Endothelial cell of umbilical vein (primary cell): ENCODE measurements at regions of chr19 and their contacts with region 1.

Region 1: GRCh38 chr19:53195265-53195903 is 2.2 kb upstream of the ZNF665 start:
- DNase-seq: peak; percentile 82
- H3K4me3 ChIP-seq: no peak overlapping the region
- H3K27ac ChIP-seq: no peak overlapping the region
- H3K4me1 ChIP-seq: peaks cover 2% of the 10 kb centered on the region
- H3K27me3 ChIP-seq: no peaks in the 10 kb centered on the region
- CTCF ChIP-seq: peak; percentile 83
- POLR2A ChIP-seq: no peak

Region 2: GRCh38 chr19:52397310-52398080 is 797.9 kb before region 1 on chr19 and contains the start of gene ZNF528:
- CTCF ChIA-PET with region 1: no interaction called
- POLR2A ChIA-PET with region 1: no interaction called
- dilution Hi-C with region 1: no loop called
- intact Hi-C with region 1: loop called (anchors 10 kb)
- DNase-seq: peak; percentile 92
- H3K4me3 ChIP-seq: peak within 1 kb of the TSS; percentile 14 to 73 (median 49)
- H3K27ac ChIP-seq: peak within 1 kb of the TSS; percentile 42
- H3K4me1 ChIP-seq: no peaks in the 10 kb centered on the region
- H3K27me3 ChIP-seq: no peaks in the 10 kb centered on the region
- CTCF ChIP-seq: no peak
- POLR2A ChIP-seq: peak; percentile 84
- total RNA-seq, gene ZNF528: 11.3 and 16.1 TPM in 2 replicates

Region 3: DNA sequence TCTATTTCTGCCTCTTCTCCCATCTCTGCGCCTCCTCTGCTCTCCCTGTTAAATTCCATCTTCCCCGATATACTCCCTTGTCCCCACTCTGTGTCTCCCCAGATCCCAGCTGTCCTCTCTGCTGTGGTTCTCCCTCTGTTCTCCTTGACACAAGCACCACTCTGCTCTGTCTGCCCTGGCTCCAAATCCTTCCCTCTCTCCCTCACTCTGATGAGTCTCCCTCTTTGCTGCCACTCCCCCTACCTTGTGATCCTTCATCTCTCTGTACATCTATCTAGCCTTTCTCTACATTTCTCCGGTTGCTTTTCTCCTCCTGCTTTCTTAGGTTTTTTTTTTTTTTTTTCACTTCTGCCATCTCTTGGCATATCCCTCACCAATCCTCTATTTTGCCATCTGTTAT is 461.5 kb before region 1 on chr19:
- CTCF ChIA-PET with region 1: no interaction called
- POLR2A ChIA-PET with region 1: no interaction called
- dilution Hi-C with region 1: no loop called
- intact Hi-C with region 1: no loop called
- DNase-seq: no peak
- H3K4me3 ChIP-seq: peak overlapping the region; percentile 47 to 96 (median 93)
- H3K27ac ChIP-seq: no peak overlapping the region
- H3K4me1 ChIP-seq: peaks cover 9% of the 10 kb centered on the region
- H3K27me3 ChIP-seq: no peaks in the 10 kb centered on the region
- CTCF ChIP-seq: no peak
- POLR2A ChIP-seq: no peak

Region 4: DNA sequence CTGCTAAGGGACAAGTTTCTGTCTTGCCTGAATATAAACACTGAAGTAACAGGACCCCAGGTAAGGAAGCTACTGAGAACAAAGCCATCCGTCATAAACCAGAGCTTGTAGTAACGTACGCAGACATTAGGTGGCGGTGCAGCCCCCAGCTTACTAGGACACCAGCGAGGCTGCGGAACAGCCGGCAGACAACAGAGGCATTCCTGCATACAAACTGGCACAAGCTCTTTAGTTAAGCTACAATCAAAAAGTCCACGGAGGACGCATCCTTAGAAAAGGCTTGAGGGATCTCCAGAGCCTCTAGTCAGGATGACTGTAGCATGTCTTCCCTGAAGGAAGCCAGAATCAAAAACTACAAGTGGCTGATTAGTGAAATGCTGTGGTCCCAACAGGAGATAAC is 118.4 kb before region 1 on chr19:
- CTCF ChIA-PET with region 1: interaction called, 20 read pairs
- POLR2A ChIA-PET with region 1: no interaction called
- dilution Hi-C with region 1: no loop called
- intact Hi-C with region 1: loop called (anchors 5 kb)
- DNase-seq: peak; percentile 72
- H3K4me3 ChIP-seq: no peak overlapping the region
- H3K27ac ChIP-seq: no peak overlapping the region
- H3K4me1 ChIP-seq: no peaks in the 10 kb centered on the region
- H3K27me3 ChIP-seq: no peaks in the 10 kb centered on the region
- CTCF ChIP-seq: peak; percentile 78 to 79
- POLR2A ChIP-seq: no peak

Region 5: DNA sequence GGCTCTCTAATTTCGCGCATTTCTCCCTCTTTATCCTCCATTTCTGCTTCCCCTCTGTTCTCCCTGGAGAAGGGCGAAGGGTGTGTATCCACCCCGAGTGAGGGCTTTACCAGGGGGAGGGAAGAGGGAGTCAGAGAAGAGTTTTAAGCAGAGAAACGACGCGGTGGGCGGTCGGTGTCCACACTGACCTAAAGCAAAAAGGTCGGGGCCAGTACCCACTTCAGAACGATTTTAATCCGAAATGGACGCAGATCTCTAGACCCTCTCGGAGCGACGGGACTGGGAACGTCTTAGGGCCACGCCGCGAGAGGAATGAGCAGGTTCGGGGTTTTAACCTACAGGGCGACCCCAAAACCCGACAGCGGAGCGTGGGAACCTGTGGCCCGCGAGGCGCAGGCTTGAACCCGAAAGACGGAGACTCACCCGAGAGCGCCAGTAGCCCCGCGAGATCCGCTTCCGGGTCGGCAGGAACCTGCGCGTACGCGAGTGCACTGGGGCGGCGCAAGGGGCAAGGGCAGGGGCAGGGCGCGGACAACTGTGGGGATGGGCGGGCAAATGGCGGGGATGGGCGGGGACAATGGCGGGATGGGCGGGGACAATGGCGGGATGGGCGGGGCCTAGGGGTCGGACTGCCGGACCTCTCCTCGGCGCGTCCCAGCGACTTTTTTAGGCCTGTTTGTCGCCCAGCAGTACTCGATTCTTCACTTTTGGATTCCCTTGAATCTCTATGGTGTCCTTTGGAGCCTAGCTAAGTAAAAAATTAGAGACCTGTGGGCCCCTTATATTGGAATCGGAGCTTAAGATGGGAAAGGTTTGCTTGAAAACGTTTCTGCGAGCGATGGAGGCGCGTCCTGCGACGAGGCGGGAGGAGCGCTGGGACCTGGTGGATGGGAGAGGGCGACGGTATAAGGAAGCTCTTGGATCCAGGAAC is 59.3 kb after region 1 on chr19 and contains the start of gene ZNF677:
- CTCF ChIA-PET with region 1: interaction called, 4 read pairs
- POLR2A ChIA-PET with region 1: no interaction called
- dilution Hi-C with region 1: no loop called
- intact Hi-C with region 1: loop called (anchors 5 kb)
- DNase-seq: peak; percentile 82
- H3K4me3 ChIP-seq: peak within 1 kb of the TSS; percentile 79 to 98 (median 90)
- H3K27ac ChIP-seq: peak within 1 kb of the TSS; percentile 42
- H3K4me1 ChIP-seq: peaks cover 7% of the 10 kb centered on the region
- H3K27me3 ChIP-seq: no peaks in the 10 kb centered on the region
- CTCF ChIP-seq: no peak
- POLR2A ChIP-seq: peak; percentile 73
- total RNA-seq, gene ZNF677: 15.8 and 21.0 TPM in 2 replicates

Region 6: GRCh38 chr19:53365134-53365898 is 169.9 kb after region 1 on chr19 and contains the start of gene ZNF525:
- CTCF ChIA-PET with region 1: interaction called, 19 read pairs
- POLR2A ChIA-PET with region 1: no interaction called
- dilution Hi-C with region 1: no loop called
- intact Hi-C with region 1: loop called (anchors 1 kb)
- DNase-seq: peak; percentile 67
- H3K4me3 ChIP-seq: peak within 1 kb of the TSS; percentile 53 to 88 (median 56)
- H3K27ac ChIP-seq: no peak within 1 kb of the TSS
- H3K4me1 ChIP-seq: peaks cover 2% of the 10 kb centered on the region
- H3K27me3 ChIP-seq: no peaks in the 10 kb centered on the region
- CTCF ChIP-seq: peak in 1 of 2 donors; percentile 16
- POLR2A ChIP-seq: peak; percentile 43
- total RNA-seq, gene ZNF525: 3.7 and 3.8 TPM in 2 replicates

Region 7: DNA sequence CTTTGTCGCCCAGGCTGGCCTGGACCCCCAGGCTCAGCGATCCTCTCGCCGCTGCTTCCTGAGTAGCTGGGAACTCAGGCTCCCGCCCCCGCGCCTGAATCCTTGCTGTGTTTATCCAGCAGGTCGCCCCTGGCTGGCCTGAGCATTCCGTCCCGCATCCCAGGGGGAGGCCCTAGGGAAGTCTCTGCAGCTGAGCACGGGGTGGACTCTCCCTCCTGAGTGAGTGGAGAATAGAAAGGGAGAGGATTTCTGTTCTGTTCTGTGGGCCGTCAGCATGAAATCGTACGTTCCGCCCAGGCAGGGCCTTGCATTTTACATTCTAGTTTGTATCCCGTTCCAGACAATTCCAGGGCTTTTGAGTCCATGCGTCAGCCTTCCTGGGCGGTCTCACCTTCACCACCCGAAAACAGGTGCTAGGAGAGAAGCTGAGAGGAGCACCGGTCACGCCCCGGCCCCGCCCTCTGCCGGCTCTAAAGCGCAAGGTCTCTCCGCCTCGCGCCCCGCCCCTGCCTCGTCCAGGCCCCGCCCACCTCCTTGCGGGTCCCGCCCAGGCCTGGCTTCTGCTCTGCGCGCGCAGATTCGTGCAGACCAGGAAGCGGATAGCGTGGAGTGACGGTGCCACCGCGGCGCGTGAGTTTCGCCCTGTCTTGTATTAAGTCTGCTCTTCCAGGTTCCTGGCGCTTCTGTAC is 236.2 kb after region 1 on chr19 and contains the start of gene ZNF761:
- CTCF ChIA-PET with region 1: interaction called, 7 read pairs
- POLR2A ChIA-PET with region 1: no interaction called
- dilution Hi-C with region 1: no loop called
- intact Hi-C with region 1: loop called (anchors 10 kb)
- DNase-seq: peak; percentile 96
- H3K4me3 ChIP-seq: peak within 1 kb of the TSS; percentile 74 to 98 (median 98)
- H3K27ac ChIP-seq: peak within 1 kb of the TSS; percentile 80
- H3K4me1 ChIP-seq: peaks cover 14% of the 10 kb centered on the region
- H3K27me3 ChIP-seq: no peaks in the 10 kb centered on the region
- CTCF ChIP-seq: peak in 1 of 2 donors; percentile 59
- POLR2A ChIP-seq: peak; percentile 83
- total RNA-seq, gene ZNF761: 7.3 and 8.8 TPM in 2 replicates

Region 8: GRCh38 chr19:53520550-53521372 is 325.4 kb after region 1 on chr19:
- CTCF ChIA-PET with region 1: interaction called, 10 read pairs
- POLR2A ChIA-PET with region 1: no interaction called
- dilution Hi-C with region 1: no loop called
- intact Hi-C with region 1: no loop called
- DNase-seq: peak; percentile 100
- H3K4me3 ChIP-seq: peak overlapping the region; percentile 63 to 79 (median 77)
- H3K27ac ChIP-seq: peak overlapping the region; percentile 39
- H3K4me1 ChIP-seq: peaks cover 8% of the 10 kb centered on the region
- H3K27me3 ChIP-seq: no peaks in the 10 kb centered on the region
- CTCF ChIP-seq: no peak
- POLR2A ChIP-seq: peak; percentile 55